ENCODE measurements at regions of chrX and their contacts with region 1.

Region 1: GRCh38 chrX:48676106-48676892 is 7.3 kb upstream of the WAS start:
- DNase-seq: peak; percentile 74 to 97 (median 81)

Region 2: GRCh38 chrX:48801280-48802088 is 125.2 kb after region 1 on chrX and contains the start of gene HDAC6:
- intact Hi-C with region 1: loop called (anchors 2 kb)
- DNase-seq: peak; percentile 86 to 100 (median 96)

Measured in posterior cingulate gyrus (tissue), 11 donors.